Colonic mucosa (tissue), 4 donors: ENCODE measurements at regions of chr19 and their contacts with region 1.

Region 1: DNA sequence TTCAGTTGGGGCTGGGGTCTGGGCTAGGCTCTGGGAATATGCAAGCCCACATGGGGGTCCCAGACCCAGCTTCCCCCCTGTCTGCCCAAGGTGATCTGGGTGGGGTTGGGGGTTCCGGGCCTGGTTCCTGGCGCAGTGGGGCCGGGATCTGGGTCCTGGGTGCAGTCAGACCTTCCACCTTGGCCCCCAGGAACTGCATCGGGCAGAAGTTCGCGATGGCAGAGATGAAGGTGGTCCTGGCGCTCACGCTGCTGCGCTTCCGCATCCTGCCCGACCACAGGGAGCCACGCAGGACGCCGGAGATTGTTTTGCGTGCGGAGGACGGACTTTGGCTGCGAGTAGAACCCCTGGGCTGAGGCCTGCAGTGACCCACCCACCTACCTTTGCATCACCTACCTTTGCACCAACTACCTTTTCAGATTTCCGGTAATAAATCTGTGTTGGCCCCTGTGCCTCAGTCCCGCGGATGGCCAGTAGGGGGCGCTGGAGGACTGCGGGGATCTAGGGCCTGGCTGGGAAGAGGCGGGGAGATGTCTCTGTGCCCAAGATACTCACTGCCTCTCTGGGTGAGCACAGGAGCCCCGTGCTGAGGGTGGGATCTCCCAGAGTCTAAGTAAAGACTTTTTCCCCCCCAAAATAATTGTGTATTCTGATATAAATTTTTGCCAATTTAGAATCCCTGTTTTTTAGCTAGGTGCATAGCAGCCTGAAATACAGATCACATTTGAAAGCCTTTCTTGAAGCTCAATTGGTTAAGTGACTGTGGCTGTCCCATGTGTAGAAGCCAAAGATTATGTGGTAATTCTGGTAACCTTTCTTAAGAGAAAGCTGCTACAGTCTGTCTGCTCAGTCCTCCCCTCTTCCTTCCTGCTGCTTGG is 11.5 kb upstream of the CYP4F3 start:
- DNase-seq: peak; percentile 93
- H3K4me3 ChIP-seq: no peak overlapping the region
- H3K27ac ChIP-seq: no peak overlapping the region
- H3K4me1 ChIP-seq: no peaks in the 10 kb centered on the region
- H3K27me3 ChIP-seq: no peaks in the 10 kb centered on the region
- CTCF ChIP-seq: peak; percentile 95

Region 2: GRCh38 chr19:15584541-15585115 is 44.6 kb before region 1 on chr19:
- intact Hi-C with region 1: no loop called
- DNase-seq: peak; percentile 85
- H3K4me3 ChIP-seq: no peak overlapping the region
- H3K27ac ChIP-seq: no peak overlapping the region
- H3K4me1 ChIP-seq: no peaks in the 10 kb centered on the region
- H3K27me3 ChIP-seq: no peaks in the 10 kb centered on the region
- CTCF ChIP-seq: peak; percentile 79

Region 3: DNA sequence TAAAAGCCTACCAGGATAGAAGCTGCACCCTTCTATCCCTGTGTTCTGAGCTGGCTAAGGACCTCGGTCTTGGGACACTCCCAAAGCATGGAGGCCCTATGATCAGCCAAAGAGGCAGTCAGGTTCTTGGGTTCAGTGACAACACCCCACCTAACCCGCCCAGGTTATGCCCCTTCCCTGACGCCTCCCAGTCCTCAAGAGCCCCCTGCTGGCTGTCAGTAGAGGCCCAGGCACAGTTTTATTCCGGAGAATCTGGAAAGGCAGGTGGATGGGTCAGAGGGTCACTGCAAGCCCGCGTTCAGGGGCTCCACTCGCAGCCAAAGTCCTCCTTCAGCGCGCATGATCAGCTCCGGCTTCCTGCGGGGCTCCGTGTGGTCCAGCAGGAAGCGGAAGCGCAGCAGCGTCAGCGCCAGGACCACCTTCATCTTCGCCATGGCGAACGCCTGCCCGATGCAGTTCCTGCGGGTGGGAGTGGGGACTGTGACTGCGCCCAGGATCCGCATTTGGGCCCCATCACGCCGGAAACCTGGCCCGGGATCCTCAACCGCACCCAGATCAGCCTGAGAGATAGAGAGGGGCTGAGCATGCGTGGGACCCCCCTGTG is 130.8 kb after region 1 on chr19:
- intact Hi-C with region 1: loop called (anchors 5 kb)
- DNase-seq: peak; percentile 26
- H3K4me3 ChIP-seq: no peak overlapping the region
- H3K27ac ChIP-seq: no peak overlapping the region
- H3K4me1 ChIP-seq: no peaks in the 10 kb centered on the region
- H3K27me3 ChIP-seq: no peaks in the 10 kb centered on the region
- CTCF ChIP-seq: peak; percentile 41

Region 4: DNA sequence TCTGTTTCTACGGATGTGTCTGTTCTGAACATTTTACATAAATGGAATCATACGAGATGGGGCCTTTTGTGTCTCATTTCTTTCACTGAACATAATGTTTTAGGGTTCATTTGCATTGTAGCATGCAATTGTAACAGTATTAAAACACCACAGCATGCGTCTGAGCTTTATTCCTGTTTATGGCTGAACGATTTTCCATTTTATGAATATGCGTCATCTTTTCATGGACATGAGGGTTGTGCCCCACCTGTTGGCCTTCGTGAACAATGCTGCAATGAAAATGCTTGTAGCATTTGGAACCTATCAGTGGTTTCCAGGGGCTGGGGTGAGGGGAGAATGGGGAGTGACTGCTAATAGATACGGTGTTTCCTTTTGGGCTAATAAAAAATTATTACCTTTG is 181.1 kb after region 1 on chr19:
- intact Hi-C with region 1: loop called (anchors 2 kb)
- DNase-seq: peak; percentile 35
- H3K4me3 ChIP-seq: no peak overlapping the region
- H3K27ac ChIP-seq: no peak overlapping the region
- H3K4me1 ChIP-seq: no peaks in the 10 kb centered on the region
- H3K27me3 ChIP-seq: no peaks in the 10 kb centered on the region
- CTCF ChIP-seq: peak; percentile 30

Region 5: GRCh38 chr19:15869109-15869555 is 239.9 kb after region 1 on chr19:
- intact Hi-C with region 1: loop called (anchors 5 kb)
- DNase-seq: peak; percentile 42
- H3K4me3 ChIP-seq: no peak overlapping the region
- H3K27ac ChIP-seq: no peak overlapping the region
- H3K4me1 ChIP-seq: no peaks in the 10 kb centered on the region
- H3K27me3 ChIP-seq: no peaks in the 10 kb centered on the region
- CTCF ChIP-seq: peak; percentile 50

Region 6: DNA sequence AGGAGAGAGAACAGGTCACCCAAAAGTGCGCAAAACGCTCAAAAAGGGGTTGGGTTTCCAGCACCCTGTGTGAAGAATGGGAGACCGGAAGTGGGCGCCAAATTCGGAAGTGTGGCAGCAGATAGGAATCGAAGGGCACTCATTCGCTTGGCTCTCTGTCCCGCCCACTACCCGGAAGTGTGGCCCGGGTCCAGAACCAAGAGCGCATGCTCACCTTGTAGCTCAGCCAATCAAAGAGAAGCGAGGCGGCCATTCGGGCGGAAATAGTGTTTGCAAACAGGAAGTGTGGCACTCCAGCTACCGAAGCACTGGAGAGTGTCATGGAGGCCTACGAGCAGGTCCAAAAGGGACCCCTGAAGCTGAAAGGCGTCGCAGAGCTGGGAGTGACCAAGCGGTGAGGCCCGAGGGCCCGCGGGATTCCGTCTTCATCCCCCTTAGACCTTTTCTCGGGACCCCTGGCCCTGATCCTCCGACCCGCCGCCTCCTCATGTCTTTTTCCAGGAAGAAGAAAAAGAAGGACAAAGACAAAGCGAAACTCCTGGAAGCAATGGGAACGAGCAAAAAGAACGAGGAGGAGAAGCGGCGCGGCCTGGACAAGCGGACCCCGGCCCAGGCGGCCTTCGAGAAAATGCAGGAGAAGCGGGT is 556.0 kb after region 1 on chr19 and contains the start of gene FAM32A:
- intact Hi-C with region 1: loop called (anchors 5 kb)
- DNase-seq: peak; percentile 99
- H3K4me3 ChIP-seq: peak within 1 kb of the TSS; percentile 94
- H3K27ac ChIP-seq: peak within 1 kb of the TSS; percentile 59
- H3K4me1 ChIP-seq: no peaks in the 10 kb centered on the region
- H3K27me3 ChIP-seq: no peaks in the 10 kb centered on the region
- CTCF ChIP-seq: peak; percentile 23
- total RNA-seq, gene FAM32A: 76.9 to 78.3 TPM